Calu3 (cell line): ENCODE measurements at regions of chr2 and their contacts with region 1.

Region 1: DNA sequence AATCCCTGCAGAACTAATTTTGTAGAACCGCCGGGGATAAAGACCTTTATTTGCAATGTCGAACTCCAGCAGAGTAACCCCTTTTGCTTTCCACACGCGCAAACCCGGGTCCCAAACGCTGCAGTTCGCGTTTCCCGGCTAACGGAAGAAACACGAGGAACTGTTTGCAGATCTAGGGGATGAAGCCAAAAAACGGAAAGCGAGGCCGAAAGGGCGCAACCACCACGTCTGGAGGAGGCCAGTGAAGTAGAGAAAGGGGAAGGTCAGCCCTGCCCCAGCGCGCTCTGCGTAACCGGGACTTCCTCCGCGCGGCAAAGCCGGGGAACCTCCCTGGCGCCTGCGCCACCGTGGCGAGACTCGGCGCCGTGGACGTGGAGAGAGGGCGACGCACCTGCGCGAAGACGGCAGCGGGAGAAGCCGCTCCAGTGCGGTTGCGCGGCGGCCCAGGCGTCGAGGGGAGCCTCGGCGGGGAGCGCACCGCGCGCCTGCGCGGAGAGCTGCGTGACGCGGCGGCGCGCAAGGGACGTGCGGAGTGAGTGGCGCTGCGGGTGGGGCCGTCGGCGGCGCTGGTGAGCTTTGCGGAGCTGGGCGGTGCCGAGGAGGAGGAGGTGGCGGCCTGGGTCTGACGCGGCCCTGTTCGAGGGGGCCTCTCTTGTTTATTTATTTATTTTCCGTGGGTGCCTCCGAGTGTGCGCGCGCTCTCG is at the start of gene PPP1CB:
- DNase-seq: peak; percentile 96
- H3K4me3 Mint-ChIP-seq: peak within 1 kb of the TSS; percentile 93
- H3K27ac Mint-ChIP-seq: peak within 1 kb of the TSS; percentile 97
- H3K4me1 Mint-ChIP-seq: peaks cover 39% of the 10 kb centered on the region
- H3K27me3 Mint-ChIP-seq: no peaks in the 10 kb centered on the region
- CTCF ChIP-seq: no peak
- total RNA-seq, gene PPP1CB: 218 and 235 TPM in 2 replicates

Region 2: DNA sequence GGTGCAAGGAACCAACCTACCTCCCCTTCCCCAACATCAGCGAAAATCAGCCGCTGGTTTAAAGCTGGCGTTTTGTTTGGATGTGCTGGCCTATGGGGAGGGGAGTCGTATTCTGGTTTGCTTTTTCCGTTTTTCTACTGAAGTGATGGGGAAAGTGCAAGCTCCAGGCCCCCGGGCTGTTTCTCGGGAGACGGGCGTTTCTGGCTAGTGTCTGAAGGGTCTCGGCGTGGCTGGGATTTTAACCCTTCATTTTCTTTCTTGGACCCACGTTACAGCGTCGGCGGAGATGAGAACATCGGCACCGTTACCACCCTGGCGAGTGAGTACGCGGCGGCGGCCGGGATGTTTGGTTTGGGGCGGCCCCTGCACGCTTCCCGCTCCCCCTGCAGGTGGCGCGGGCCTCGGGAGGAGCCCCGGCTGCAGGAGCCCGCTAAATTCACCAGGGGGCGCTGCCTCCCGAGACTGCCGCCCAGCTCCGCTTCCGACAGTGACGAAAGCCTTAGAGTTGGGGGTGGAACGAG is 184.8 kb before region 1 on chr2:
- CTCF ChIA-PET with region 1: no interaction called
- intact Hi-C with region 1: loop called (anchors 1 kb)
- DNase-seq: peak; percentile 93
- H3K4me3 Mint-ChIP-seq: peak overlapping the region; percentile 75
- H3K27ac Mint-ChIP-seq: peak overlapping the region; percentile 26
- H3K4me1 Mint-ChIP-seq: no peaks in the 10 kb centered on the region
- H3K27me3 Mint-ChIP-seq: no peaks in the 10 kb centered on the region
- CTCF ChIP-seq: peak; percentile 99

Region 3: GRCh38 chr2:28621172-28622100 is 130.0 kb before region 1 on chr2:
- CTCF ChIA-PET with region 1: interaction called, 15 read pairs
- intact Hi-C with region 1: loop called (anchors 1 kb)
- DNase-seq: peak; percentile 84
- H3K4me3 Mint-ChIP-seq: peak overlapping the region; percentile 61
- H3K27ac Mint-ChIP-seq: peak overlapping the region; percentile 99
- H3K4me1 Mint-ChIP-seq: peaks cover 69% of the 10 kb centered on the region
- H3K27me3 Mint-ChIP-seq: no peaks in the 10 kb centered on the region
- CTCF ChIP-seq: peak; percentile 67

Region 4: DNA sequence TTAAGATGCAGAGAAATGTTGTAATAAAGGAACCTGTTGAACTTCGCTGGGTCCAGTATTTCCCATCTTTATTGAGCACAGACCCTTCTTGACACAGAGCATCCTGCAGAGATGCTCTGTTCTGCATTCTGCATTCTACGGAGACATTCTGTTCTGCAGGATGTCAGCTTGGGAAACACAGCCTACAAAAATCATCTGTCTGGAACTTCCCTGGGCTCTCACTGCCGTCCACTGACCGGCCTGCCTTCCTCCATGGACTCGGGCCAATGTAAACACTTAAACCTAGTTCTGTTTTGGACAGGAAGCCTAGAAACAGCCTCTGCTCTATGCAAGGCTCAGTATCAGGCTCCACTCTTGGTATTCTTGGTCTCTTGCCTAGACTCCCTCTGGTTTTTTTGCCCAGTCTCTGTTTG is 89.8 kb before region 1 on chr2:
- CTCF ChIA-PET with region 1: interaction called, 4 read pairs
- intact Hi-C with region 1: loop called (anchors 2 kb)
- DNase-seq: peak; percentile 68
- H3K4me3 Mint-ChIP-seq: peak overlapping the region; percentile 36
- H3K27ac Mint-ChIP-seq: peak overlapping the region; percentile 91
- H3K4me1 Mint-ChIP-seq: peaks cover 62% of the 10 kb centered on the region
- H3K27me3 Mint-ChIP-seq: no peaks in the 10 kb centered on the region
- CTCF ChIP-seq: no peak

Region 5: GRCh38 chr2:28835781-28836180 is 84.4 kb after region 1 on chr2:
- CTCF ChIA-PET with region 1: no interaction called
- intact Hi-C with region 1: no loop called
- DNase-seq: no peak
- H3K4me3 Mint-ChIP-seq: no peak overlapping the region
- H3K27ac Mint-ChIP-seq: no peak overlapping the region
- H3K4me1 Mint-ChIP-seq: no peaks in the 10 kb centered on the region
- H3K27me3 Mint-ChIP-seq: no peaks in the 10 kb centered on the region
- CTCF ChIP-seq: no peak